ENCODE measurements at regions of chr2 and their contacts with region 1.

Region 1: GRCh38 chr2:152175458-152176325 is at the start of gene STAM2:
- DNase-seq: peak; percentile 93
- H3K4me3 Mint-ChIP-seq: peak within 1 kb of the TSS; percentile 95
- H3K27ac Mint-ChIP-seq: peak within 1 kb of the TSS; percentile 97
- H3K4me1 Mint-ChIP-seq: peaks cover 35% of the 10 kb centered on the region
- H3K27me3 Mint-ChIP-seq: no peaks in the 10 kb centered on the region
- total RNA-seq, gene STAM2: 9.6 to 10.8 TPM

Region 2: GRCh38 chr2:151644580-151644979 is 531.1 kb before region 1 on chr2:
- CTCF ChIA-PET with region 1: no interaction called
- intact Hi-C with region 1: no loop called
- DNase-seq: no peak
- H3K4me3 Mint-ChIP-seq: no peak overlapping the region
- H3K27ac Mint-ChIP-seq: no peak overlapping the region
- H3K4me1 Mint-ChIP-seq: peaks cover 6% of the 10 kb centered on the region
- H3K27me3 Mint-ChIP-seq: no peaks in the 10 kb centered on the region

Region 3: DNA sequence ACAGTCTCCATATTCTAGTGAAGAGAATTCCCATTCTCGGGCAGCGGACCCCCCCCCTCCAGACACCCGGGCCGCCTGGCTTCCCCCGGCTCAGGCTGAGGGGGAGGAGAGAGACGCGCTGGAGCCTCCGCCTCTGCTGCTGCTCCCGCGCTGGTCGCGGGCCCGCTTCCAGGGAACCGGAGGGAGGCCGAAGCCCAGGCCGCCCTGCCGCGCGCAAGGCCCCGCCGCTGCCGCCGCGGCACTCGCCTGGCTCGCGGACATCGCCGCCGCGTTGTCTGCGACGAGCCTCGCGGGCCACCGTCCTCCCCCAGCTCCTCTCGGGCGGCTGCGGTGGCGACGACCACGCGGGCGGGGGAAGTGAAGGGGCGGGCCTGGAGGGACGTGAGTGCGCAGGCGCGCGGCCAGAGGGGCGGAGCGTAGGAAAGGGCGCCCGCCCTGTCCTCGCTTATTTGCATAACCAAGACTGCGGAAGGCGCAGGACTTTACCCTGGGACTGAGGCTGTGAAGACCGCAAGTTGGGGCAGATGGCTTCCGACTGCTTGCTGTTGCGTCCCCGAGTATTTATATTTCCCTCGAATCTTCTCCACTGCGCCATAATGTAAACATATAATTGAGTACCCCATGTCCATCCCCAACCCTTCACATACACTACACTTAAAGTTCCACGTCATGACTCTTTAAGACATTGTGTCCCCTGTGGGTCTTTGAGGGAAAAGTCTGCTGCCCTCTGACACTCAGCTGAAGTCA is 347.4 kb before region 1 on chr2 and contains the start of gene ARL5A:
- CTCF ChIA-PET with region 1: no interaction called
- intact Hi-C with region 1: loop called (anchors 1 kb)
- DNase-seq: peak; percentile 94
- H3K4me3 Mint-ChIP-seq: peak within 1 kb of the TSS; percentile 95
- H3K27ac Mint-ChIP-seq: peak within 1 kb of the TSS; percentile 82
- H3K4me1 Mint-ChIP-seq: peaks cover 39% of the 10 kb centered on the region
- H3K27me3 Mint-ChIP-seq: no peaks in the 10 kb centered on the region
- total RNA-seq, gene ARL5A: 40.6 to 43.7 TPM

Region 4: GRCh38 chr2:152236191-152236925 is 60.7 kb after region 1 on chr2:
- CTCF ChIA-PET with region 1: no interaction called
- intact Hi-C with region 1: no loop called
- DNase-seq: no peak
- H3K4me3 Mint-ChIP-seq: no peak overlapping the region
- H3K27ac Mint-ChIP-seq: no peak overlapping the region
- H3K4me1 Mint-ChIP-seq: no peaks in the 10 kb centered on the region
- H3K27me3 Mint-ChIP-seq: no peaks in the 10 kb centered on the region

Region 5: DNA sequence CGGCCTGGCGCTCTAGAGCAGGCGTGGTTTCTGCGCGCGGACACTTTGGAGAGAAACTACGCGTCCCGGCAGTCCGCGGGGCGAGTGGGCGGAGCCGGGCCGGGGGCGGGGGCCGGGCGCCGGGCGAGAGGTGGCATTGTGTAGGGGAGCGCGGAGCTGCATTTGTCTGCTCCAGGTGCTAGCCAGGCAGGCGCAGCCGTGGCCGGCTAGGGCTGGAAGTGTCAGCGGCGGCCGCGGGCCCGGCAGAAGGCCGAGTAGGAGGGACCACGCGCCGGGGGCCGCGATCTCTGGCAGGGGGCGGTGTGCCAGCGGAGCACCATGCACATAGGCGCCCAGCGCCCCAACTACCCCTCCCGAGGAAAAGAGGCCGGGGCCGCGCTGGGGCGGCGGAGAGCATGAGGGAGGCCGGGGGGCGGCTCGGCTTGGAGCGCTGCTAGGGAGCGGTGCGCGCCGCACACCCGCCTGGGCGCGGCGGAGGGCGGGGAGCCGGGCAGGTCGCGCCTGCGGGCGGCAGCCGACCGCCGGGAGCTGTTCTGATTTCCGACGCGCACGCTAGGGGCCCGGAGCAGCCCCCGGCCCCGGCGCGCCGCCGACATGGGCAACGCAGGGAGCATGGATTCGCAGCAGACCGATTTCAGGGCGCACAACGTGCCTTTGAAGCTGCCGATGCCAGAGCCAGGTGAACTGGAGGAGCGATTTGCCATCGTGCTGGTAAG is 159.5 kb after region 1 on chr2 and contains the start of gene FMNL2:
- CTCF ChIA-PET with region 1: no interaction called
- intact Hi-C with region 1: loop called (anchors 1 kb)
- DNase-seq: peak; percentile 64
- H3K4me3 Mint-ChIP-seq: peak within 1 kb of the TSS; percentile 80
- H3K27ac Mint-ChIP-seq: no peak within 1 kb of the TSS
- H3K4me1 Mint-ChIP-seq: peaks cover 8% of the 10 kb centered on the region
- H3K27me3 Mint-ChIP-seq: peaks cover 41% of the 10 kb centered on the region
- total RNA-seq, gene FMNL2: 2.5 to 2.7 TPM

Region 6: GRCh38 chr2:152627351-152627957 is 451.8 kb after region 1 on chr2:
- CTCF ChIA-PET with region 1: no interaction called
- intact Hi-C with region 1: loop called (anchors 1 kb)
- DNase-seq: no peak
- H3K4me3 Mint-ChIP-seq: no peak overlapping the region
- H3K27ac Mint-ChIP-seq: no peak overlapping the region
- H3K4me1 Mint-ChIP-seq: peaks cover 4% of the 10 kb centered on the region
- H3K27me3 Mint-ChIP-seq: peaks cover 6% of the 10 kb centered on the region

Region 7: GRCh38 chr2:152740743-152741328 is 565.1 kb after region 1 on chr2:
- CTCF ChIA-PET with region 1: interaction called, 4 read pairs
- intact Hi-C with region 1: loop called (anchors 1 kb)
- DNase-seq: no peak
- H3K4me3 Mint-ChIP-seq: no peak overlapping the region
- H3K27ac Mint-ChIP-seq: no peak overlapping the region
- H3K4me1 Mint-ChIP-seq: no peaks in the 10 kb centered on the region
- H3K27me3 Mint-ChIP-seq: no peaks in the 10 kb centered on the region